OCI-LY7 (cell line): ENCODE measurements at regions of chr1 and their contacts with region 1.

Region 1: DNA sequence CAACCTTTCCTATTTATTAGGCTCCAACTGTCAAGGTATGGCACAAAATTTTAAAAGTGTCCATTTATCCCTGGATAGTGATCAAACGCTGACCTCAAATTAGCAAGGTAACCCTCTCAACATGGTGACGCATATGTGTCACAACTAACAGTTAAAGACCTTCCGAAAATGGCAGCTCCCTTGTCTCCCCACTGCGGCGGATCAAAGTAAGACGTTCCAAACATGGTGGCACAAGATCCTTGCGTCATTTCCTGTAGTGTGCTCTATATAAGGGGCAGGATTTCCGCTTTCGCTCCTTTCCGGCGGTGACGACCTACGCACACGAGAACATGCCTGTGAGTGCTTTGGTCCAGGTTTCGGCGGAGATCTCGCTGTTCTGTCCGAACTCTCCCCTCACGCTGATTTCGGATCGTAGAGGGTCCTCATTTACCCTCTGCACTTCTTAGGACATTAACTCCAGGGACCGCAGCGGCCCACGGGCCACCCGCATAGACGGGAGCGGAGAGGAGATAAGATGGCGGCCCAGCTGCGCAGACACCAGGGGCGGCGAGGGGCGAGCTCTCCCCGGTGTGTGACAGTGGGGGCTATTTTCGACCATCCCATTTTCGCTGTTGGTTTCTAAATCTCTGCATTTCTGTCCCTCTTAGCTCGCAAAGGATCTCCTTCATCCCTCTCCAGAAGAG is at the start of gene RPS27:
- DNase-seq: peak; percentile 99
- H3K4me3 ChIP-seq: peak within 1 kb of the TSS; percentile 81
- H3K27ac ChIP-seq: peak within 1 kb of the TSS; percentile 62
- H3K4me1 ChIP-seq: peaks cover 50% of the 10 kb centered on the region
- CTCF ChIP-seq: no peak
- total RNA-seq, gene RPS27: 4,465 and 5,738 TPM in 2 replicates

Region 2: GRCh38 chr1:153510984-153511410 is 479.6 kb before region 1 on chr1:
- CTCF ChIA-PET with region 1: no interaction called
- POLR2A ChIA-PET with region 1: no interaction called
- intact Hi-C with region 1: loop called (anchors 10 kb)
- DNase-seq: peak; percentile 77
- H3K4me3 ChIP-seq: no peak overlapping the region
- H3K27ac ChIP-seq: no peak overlapping the region
- H3K4me1 ChIP-seq: no peaks in the 10 kb centered on the region
- CTCF ChIP-seq: peak; percentile 96

Region 3: DNA sequence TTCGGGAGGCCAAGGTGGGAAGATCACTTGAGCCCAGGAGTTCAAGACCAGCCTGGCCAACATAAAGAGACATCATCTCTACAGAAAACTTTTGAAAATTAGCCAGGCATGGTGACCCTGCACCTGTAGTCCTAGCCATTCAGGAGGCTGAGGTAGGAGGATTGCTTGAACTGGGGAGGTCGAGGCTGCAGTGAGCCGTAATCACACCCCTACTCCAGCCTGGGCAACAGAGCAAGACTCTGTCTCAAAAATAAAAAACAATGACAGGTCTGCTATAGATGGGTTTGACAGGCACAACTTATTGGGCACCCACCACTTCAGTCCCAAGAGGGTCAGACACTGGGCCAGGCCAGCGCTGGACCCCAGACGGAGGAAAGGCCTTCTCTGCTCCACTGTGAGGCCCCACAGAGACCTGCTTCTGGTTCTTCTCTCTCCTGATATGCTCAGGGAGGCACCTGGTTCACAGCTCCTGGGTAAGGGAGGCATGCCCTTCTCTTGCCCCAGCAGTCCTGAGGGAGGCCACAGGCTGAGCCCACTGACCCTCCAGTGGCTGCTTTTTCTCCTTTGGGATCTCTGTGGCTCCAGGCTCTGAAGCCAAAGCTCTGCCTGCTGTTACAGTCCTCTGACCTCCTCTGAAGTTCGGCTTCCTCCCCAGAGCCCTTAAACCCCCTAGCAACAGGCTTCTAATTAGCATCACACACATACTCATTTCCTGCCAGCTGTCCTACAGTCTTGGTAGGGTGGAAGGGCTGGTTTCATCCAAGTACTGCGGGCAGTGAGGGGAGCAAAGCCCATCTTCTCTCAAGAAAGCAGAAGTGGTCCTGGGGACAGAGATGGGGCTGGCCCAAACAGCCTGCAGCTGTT is 392.1 kb before region 1 on chr1:
- CTCF ChIA-PET with region 1: no interaction called
- POLR2A ChIA-PET with region 1: no interaction called
- intact Hi-C with region 1: no loop called
- DNase-seq: peak; percentile 98
- H3K4me3 ChIP-seq: peak overlapping the region; percentile 56
- H3K27ac ChIP-seq: peak overlapping the region; percentile 92
- H3K4me1 ChIP-seq: peaks cover 29% of the 10 kb centered on the region
- CTCF ChIP-seq: no peak

Region 4: DNA sequence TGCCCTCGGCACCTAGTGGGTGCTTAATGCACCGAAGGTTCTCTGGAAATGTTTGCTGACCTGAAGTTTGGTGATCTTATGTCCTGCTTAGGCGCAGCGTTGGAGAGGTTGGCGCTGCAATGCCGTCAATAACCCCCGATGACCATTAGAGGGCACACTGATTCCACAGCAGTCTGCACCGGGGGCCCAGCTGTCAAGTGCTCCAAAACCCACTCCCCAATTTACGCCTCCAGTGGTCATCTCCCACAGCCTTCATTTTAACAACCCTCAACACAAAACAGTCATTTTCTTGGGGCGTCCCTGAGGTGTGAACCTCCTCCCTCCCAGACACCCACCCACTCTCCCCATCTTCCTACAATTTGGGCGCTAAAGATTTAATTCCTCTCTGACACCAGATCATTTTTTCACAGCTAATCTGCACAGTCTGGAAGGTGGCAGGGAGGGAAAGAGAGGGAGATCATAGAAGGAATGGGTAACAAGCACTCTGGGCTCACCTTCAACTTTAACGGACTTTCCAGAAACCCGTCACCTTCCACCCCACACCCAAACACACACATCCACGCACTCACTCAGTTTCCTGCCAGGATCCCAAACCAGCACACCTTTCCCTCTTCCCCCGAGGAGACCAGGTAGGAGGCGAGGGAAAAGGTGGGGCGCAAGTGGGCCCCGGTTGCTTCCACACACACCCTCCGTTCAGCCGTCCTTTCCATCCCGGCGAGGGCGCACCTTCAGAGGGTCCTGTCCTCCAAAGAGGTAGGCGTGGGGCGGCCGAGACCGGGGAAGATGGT is 312.7 kb before region 1 on chr1:
- CTCF ChIA-PET with region 1: no interaction called
- POLR2A ChIA-PET with region 1: no interaction called
- intact Hi-C with region 1: loop called (anchors 2 kb)
- DNase-seq: peak; percentile 71
- H3K4me3 ChIP-seq: no peak overlapping the region
- H3K27ac ChIP-seq: no peak overlapping the region
- H3K4me1 ChIP-seq: no peaks in the 10 kb centered on the region
- CTCF ChIP-seq: peak; percentile 99

Region 5: DNA sequence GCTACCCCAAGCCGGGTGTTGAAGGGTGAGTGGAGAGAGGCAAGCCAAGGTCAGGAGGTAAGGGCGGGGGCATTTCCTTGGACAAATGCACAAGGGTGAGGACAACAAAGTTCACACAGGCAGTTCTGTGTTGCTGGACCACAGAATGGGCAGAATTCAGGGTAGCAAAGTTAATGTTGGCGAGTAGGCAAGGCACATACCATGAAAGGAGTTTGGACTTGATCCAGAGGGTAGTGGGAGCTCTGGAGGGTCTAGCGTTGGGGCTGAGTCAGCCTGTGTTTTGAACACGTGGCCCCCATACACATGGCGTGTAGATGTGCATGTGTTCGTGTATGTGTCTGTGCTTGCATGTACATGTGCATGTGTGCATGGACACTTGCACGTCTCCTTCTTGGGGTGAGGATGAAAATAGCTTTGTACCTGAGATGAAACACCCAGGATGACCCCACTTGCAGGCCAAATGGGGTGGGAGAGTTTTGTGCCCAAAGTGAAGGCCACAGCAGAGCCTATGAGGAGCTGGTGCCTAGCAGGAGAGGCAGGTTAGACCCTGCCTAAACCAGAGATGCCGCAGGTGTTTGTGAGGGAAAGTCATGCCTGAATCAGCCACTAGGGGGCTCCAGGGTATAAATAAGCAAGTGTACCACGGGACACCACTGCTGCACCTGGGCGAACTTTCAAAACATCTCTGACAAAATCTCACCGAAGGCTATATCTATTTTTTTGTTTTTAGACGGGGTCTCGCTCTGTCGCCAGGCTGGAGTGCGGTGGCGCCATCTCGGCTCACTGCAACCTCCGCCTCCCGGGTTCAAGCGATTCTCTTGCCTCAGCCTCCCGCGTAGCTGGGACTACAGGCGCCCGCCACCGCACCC is 193.6 kb before region 1 on chr1:
- CTCF ChIA-PET with region 1: interaction called, 5 read pairs
- POLR2A ChIA-PET with region 1: interaction called, 4 read pairs
- intact Hi-C with region 1: loop called (anchors 1 kb)
- DNase-seq: peak; percentile 88
- H3K4me3 ChIP-seq: no peak overlapping the region
- H3K27ac ChIP-seq: no peak overlapping the region
- H3K4me1 ChIP-seq: peaks cover 5% of the 10 kb centered on the region
- CTCF ChIP-seq: peak; percentile 83

Region 6: GRCh38 chr1:153816283-153816889 is 174.2 kb before region 1 on chr1:
- CTCF ChIA-PET with region 1: no interaction called
- POLR2A ChIA-PET with region 1: interaction called, 3 read pairs
- intact Hi-C with region 1: loop called (anchors 1 kb)
- DNase-seq: no peak
- H3K4me3 ChIP-seq: no peak overlapping the region
- H3K27ac ChIP-seq: no peak overlapping the region
- H3K4me1 ChIP-seq: peaks cover 3% of the 10 kb centered on the region
- CTCF ChIP-seq: no peak

Region 7: GRCh38 chr1:154081386-154082126 is 90.9 kb after region 1 on chr1:
- CTCF ChIA-PET with region 1: no interaction called
- POLR2A ChIA-PET with region 1: no interaction called
- intact Hi-C with region 1: no loop called
- DNase-seq: no peak
- H3K4me3 ChIP-seq: no peak overlapping the region
- H3K27ac ChIP-seq: no peak overlapping the region
- H3K4me1 ChIP-seq: no peaks in the 10 kb centered on the region
- CTCF ChIP-seq: no peak

Region 8: GRCh38 chr1:154272217-154272998 is 281.8 kb after region 1 on chr1 and contains the start of gene HAX1:
- CTCF ChIA-PET with region 1: no interaction called
- POLR2A ChIA-PET with region 1: no interaction called
- intact Hi-C with region 1: loop called (anchors 1 kb)
- DNase-seq: peak; percentile 98
- H3K4me3 ChIP-seq: peak within 1 kb of the TSS; percentile 92
- H3K27ac ChIP-seq: peak within 1 kb of the TSS; percentile 74
- H3K4me1 ChIP-seq: peaks cover 21% of the 10 kb centered on the region
- CTCF ChIP-seq: peak; percentile 94
- total RNA-seq, gene HAX1: 196 and 208 TPM in 2 replicates

Region 9: GRCh38 chr1:154352581-154353459 is 362.2 kb after region 1 on chr1:
- CTCF ChIA-PET with region 1: no interaction called
- POLR2A ChIA-PET with region 1: no interaction called
- intact Hi-C with region 1: no loop called
- DNase-seq: no peak
- H3K4me3 ChIP-seq: no peak overlapping the region
- H3K27ac ChIP-seq: no peak overlapping the region
- H3K4me1 ChIP-seq: no peaks in the 10 kb centered on the region
- CTCF ChIP-seq: no peak